ENCODE measurements at regions of chr20 and their contacts with region 1.

Region 1: DNA sequence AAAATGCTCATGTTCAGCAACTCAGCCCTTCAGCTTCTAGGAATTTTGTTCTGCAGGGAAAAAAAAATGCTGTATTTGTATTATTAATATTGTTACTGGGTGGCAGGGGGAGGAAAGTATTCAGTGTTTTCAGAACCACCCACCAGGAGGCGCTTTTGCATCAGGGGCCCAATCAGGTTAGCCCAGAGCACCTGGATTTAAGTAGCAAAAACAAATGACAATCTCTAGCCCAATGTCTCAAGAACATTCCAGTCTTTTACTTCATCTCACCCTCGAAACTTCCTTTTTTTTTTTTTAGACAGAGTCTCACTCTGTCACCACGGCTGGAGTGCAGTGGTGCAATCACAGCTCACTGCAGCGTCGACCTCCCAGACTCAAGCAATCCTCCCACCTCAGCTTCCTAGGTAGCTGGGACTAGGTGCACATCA is 635 bp upstream of the C20orf203 start:
- DNase-seq: peak; percentile 50
- ATAC-seq: peak; percentile 78
- H3K4me3 ChIP-seq: no peak overlapping the region
- H3K27ac ChIP-seq: no peak overlapping the region
- H3K4me1 ChIP-seq: no peaks in the 10 kb centered on the region
- H3K27me3 ChIP-seq: peaks cover 2% of the 10 kb centered on the region; the same call in 1 of the 2 replicates
- CTCF ChIP-seq: peak; percentile 88
- POLR2A ChIP-seq: 0 out of 2 replicates have a peak, but pooled peaks have one; percentile 38
- RAD21 ChIP-seq: peak; percentile 96

Region 2: GRCh38 chr20:31951530-31952453 is 722.6 kb before region 1 on chr20 and contains the start of gene PDRG1:
- CTCF ChIA-PET with region 1: no interaction called
- POLR2A ChIA-PET with region 1: no interaction called
- dilution Hi-C with region 1: no loop called
- in situ Hi-C with region 1: no loop called
- intact Hi-C with region 1: no loop called
- DNase-seq: peak; percentile 93
- ATAC-seq: peak; percentile 100
- H3K4me3 ChIP-seq: peak within 1 kb of the TSS; percentile 83
- H3K27ac ChIP-seq: peak within 1 kb of the TSS; percentile 66
- H3K4me1 ChIP-seq: peaks cover 6% of the 10 kb centered on the region
- H3K27me3 ChIP-seq: peaks cover 10% of the 10 kb centered on the region
- CTCF ChIP-seq: peak; percentile 98
- POLR2A ChIP-seq: peak; percentile 87
- RAD21 ChIP-seq: peak; percentile 67
- total RNA-seq, gene PDRG1: 5.0 and 5.8 TPM in 2 replicates

Region 3: DNA sequence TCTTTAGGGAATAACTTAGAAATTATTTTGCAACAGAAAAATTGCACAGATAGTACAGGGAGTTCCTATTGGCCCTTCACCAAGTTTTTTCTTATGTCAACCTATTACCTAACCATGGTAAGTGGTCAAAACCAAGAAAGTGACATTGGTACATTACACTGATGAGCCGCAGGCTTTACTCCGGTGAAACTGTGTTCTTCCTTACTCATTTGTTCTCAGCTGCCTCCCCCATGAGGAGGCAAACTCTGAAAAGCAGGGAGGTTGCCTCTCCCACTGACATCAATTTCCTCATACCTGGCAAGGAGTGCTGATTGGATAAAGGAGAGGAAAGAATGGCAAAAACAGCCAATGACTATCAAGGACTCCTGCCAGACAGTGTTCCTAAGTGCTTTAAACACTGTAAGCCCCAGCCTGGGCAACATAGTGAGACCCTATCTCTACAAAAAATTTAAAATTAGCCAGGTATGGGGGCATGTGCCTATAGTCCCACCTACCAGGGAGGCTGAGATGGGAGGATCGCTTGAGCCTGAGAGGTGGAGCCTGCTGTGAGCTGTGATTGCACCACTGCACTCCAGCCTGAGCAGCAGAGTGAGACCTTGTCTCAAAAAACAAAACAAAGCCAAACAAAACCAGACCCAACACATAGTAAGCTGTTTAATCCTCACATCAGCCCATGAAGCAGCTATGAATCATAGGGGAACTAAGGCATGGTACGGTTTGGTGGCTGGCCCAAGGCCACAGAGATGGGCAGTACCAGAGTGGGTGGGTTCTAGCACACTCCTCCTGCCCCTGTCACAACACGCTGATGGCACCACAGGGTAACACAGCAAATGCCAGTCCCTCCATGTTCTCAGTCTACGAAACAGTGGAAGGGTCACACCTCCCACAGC is 25.4 kb before region 1 on chr20:
- CTCF ChIA-PET with region 1: no interaction called
- POLR2A ChIA-PET with region 1: no interaction called
- dilution Hi-C with region 1: no loop called
- in situ Hi-C with region 1: no loop called
- intact Hi-C with region 1: no loop called
- DNase-seq: peak; percentile 17
- ATAC-seq: peak; percentile 10; the same call in 1 of the 2 replicates
- H3K4me3 ChIP-seq: no peak overlapping the region
- H3K27ac ChIP-seq: no peak overlapping the region
- H3K4me1 ChIP-seq: no peaks in the 10 kb centered on the region
- H3K27me3 ChIP-seq: peaks cover 16% of the 10 kb centered on the region
- CTCF ChIP-seq: no peak
- POLR2A ChIP-seq: no peak
- RAD21 ChIP-seq: no peak

Region 4: GRCh38 chr20:32743237-32744112 is 69.1 kb after region 1 on chr20 and contains the start of gene COMMD7:
- CTCF ChIA-PET with region 1: no interaction called
- POLR2A ChIA-PET with region 1: no interaction called
- dilution Hi-C with region 1: no loop called
- in situ Hi-C with region 1: no loop called
- intact Hi-C with region 1: no loop called
- DNase-seq: peak; percentile 44
- ATAC-seq: peak; percentile 73
- H3K4me3 ChIP-seq: peak within 1 kb of the TSS; percentile 89
- H3K27ac ChIP-seq: peak within 1 kb of the TSS; percentile 62
- H3K4me1 ChIP-seq: peaks cover 16% of the 10 kb centered on the region
- H3K27me3 ChIP-seq: no peaks in the 10 kb centered on the region
- CTCF ChIP-seq: no peak
- POLR2A ChIP-seq: 0 out of 2 replicates have a peak, but pooled peaks have one; percentile 46
- RAD21 ChIP-seq: 0 out of 2 replicates have a peak, but pooled peaks have one; percentile 2
- total RNA-seq, gene COMMD7: 46.9 and 51.8 TPM in 2 replicates

Region 5: DNA sequence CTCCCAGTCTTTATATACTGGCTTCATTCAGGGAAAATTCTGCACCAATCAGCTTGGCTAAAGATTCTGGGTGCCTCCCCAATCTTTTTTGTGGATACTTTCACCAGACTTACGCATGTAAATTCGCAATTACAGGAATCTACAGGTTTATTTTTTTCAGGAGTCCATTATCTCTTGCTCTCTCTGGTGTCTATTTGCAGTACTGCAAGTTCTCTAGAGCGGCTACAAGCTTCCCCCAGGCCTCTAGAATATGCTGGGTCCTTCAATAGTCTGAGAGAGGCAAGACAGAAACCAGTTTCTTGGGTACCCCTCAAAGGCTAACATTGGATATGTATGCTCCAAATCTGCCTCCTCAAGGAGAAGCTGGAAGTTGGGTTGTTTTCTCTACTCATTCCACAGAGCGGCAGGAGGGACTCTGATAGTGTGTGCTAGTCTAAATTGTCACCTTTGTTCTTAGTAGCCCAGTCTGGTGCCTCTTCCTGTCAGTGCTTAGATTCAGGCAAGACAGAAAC is 271.4 kb after region 1 on chr20:
- CTCF ChIA-PET with region 1: no interaction called
- POLR2A ChIA-PET with region 1: no interaction called
- dilution Hi-C with region 1: no loop called
- in situ Hi-C with region 1: no loop called
- intact Hi-C with region 1: loop called (anchors 10 kb)
- DNase-seq: peak; percentile 34
- ATAC-seq: peak; percentile 86
- H3K4me3 ChIP-seq: no peak overlapping the region
- H3K27ac ChIP-seq: no peak overlapping the region
- H3K4me1 ChIP-seq: no peaks in the 10 kb centered on the region
- H3K27me3 ChIP-seq: peaks cover 10% of the 10 kb centered on the region
- CTCF ChIP-seq: peak; percentile 50
- POLR2A ChIP-seq: no peak
- RAD21 ChIP-seq: peak; percentile 51

Measured in IMR-90 (cell line).